H1 (cell line): ENCODE measurements at regions of chr11 and their contacts with region 1.

Region 1: DNA sequence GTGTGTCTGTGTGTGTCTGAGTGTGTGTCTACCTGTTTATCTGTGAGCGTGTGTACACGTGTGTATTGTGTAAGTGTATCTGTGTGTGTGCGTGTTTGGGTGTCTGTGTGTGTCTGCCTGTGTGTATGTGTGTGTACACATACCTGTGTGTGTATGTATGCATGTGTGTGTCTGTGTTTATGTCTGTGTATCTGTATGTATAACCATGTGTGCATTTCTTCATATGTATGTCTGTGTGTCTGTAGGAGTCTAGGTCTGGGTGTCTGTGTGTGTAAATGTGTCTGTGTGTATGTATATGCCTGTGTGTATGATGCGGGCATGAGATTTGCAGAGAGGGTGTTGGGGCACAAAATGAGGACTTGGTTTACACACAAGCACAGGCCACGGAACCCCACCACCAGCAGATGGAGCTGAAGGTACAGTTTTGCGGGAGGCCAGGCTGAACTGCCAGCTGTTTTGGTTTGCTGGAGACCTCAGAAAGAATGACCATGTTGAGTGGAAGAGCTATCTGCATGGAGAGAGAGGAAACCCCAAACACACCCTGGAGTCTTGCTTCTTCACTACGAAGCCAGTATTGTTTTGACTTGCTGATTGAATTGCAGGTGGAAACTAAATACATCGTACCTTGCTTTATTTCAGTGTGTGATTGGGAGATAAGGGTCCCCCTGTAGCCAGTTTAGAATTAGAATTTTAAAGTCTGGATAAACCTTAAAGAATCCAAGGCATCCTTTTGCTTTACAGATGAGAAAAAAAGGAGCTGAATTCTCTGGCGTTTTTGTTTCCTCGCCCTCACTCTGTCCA is 497.2 kb downstream of the NTM start:
- DNase-seq: peak; percentile 68 to 86
- H3K4me3 ChIP-seq: no peak overlapping the region
- H3K27ac ChIP-seq: no peak overlapping the region
- H3K4me1 ChIP-seq: peaks cover 18 to 33% (median 20%) of the 10 kb centered on the region in 4 experiments
- H3K27me3 ChIP-seq: no peaks in the 10 kb centered on the region
- CTCF ChIP-seq: peak; percentile 91 to 98 (median 96)
- EP300 ChIP-seq: no peak
- POLR2A ChIP-seq: no peak
- RAD21 ChIP-seq: peak; percentile 96

Region 2: DNA sequence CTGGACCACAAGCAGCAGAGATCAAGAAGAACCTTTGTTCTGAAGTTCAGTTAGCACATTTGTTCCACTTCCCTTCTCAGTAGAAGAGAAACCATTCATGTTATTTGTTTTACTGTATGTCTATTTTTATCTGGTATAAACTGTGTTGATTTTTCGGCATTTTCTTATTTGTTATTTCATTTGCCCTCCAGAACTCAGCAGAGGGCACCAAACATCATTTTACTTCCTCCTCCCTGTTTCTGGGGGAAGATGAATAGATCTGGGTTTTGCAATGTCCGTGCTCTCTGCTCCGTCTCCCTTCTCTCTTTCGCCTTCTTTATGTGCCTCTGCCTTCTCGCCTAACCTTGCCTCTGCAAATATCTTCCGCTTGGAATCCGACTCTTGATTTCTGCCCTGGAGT is 130.3 kb before region 1 on chr11:
- CTCF ChIA-PET with region 1: interaction called, 10 read pairs
- POLR2A ChIA-PET with region 1: no interaction called
- DNase-seq: no peak
- H3K4me3 ChIP-seq: no peak overlapping the region
- H3K27ac ChIP-seq: no peak overlapping the region
- H3K4me1 ChIP-seq: peaks cover 0 to 6% (median 0%) of the 10 kb centered on the region in 4 experiments; a peak in 1 of 7 replicates
- H3K27me3 ChIP-seq: no peaks in the 10 kb centered on the region
- CTCF ChIP-seq: peak in 1 of 3 experiments; percentile 6; a peak in 1 of 4 replicates
- EP300 ChIP-seq: no peak
- POLR2A ChIP-seq: no peak
- RAD21 ChIP-seq: peak; percentile 21 to 32; a peak in 3 of 4 replicates

Region 3: DNA sequence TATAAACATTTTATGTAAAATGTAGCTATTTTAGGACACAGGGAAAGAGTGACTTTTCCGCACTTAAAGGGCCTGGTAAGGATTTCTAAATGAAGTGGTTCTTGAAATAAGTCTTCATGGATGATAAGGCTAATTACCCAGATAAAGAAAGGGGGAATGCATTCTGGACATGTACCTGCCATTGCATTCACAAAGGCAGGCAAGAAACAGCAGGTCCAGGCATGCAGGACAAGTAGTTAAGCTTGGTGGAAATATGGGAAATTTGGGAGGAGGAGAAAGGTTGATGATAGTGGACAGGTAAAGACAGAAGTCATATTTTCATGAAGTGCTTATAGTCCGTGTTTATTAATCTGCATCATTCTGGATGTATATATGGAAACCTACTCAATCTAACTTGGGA is 123.9 kb after region 1 on chr11:
- CTCF ChIA-PET with region 1: no interaction called
- POLR2A ChIA-PET with region 1: no interaction called
- DNase-seq: no peak
- H3K4me3 ChIP-seq: no peak overlapping the region
- H3K27ac ChIP-seq: no peak overlapping the region
- H3K4me1 ChIP-seq: no peaks in the 10 kb centered on the region
- H3K27me3 ChIP-seq: no peaks in the 10 kb centered on the region
- CTCF ChIP-seq: no peak
- EP300 ChIP-seq: no peak
- POLR2A ChIP-seq: no peak
- RAD21 ChIP-seq: no peak

Region 4: DNA sequence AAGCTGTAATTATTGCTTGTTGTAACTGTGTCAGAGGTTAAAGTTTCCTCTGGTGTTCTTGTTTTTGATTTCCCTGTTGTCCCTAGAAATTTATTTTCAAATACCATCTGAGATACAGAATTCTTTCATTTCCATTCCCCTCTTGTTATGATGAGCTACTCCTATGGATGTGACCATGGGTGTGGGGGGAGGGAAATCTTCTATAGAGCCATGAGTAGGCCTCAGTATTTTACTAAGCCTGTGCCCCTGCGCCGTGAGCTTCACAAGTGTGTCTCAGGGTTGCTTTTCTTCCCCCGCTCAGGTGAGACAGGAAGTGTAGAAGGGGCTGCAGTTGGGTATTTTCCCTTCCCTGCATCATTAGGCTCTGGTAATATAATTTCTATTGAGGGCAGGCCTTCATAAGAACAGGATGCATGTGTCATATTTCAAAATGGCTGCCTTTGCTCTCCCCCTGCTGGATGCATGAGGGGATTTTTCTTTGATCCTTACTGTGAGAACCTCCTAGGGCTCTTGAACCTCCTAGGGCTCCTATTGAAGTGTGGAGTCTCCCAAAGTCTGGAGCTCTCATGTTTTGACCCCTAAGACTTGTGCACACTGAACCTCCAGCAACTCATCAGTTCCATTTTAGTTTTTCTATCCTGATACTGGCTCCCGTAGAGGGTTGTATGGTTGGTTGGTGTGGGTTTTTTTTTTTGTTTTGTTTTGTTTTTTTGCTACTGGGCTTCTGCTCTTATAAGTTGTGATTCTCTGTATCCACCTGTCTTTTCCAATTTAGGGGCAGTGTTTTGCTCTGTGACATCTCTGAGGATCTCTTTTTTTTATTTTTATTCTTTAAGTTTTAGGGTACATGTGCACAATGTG is 161.0 kb after region 1 on chr11:
- CTCF ChIA-PET with region 1: interaction called, 12 read pairs
- POLR2A ChIA-PET with region 1: no interaction called
- DNase-seq: no peak
- H3K4me3 ChIP-seq: no peak overlapping the region
- H3K27ac ChIP-seq: no peak overlapping the region
- H3K4me1 ChIP-seq: peaks cover 2 to 8% (median 4%) of the 10 kb centered on the region in 4 experiments; a peak in 4 of 7 replicates
- H3K27me3 ChIP-seq: no peaks in the 10 kb centered on the region
- CTCF ChIP-seq: peak in 2 of 3 experiments; percentile 57 to 61; a peak in 3 of 4 replicates
- EP300 ChIP-seq: no peak
- POLR2A ChIP-seq: no peak
- RAD21 ChIP-seq: peak; percentile 39 to 62